AG04449 (cell line): ENCODE measurements at regions of chr3 and their contacts with region 1.

Region 1: DNA sequence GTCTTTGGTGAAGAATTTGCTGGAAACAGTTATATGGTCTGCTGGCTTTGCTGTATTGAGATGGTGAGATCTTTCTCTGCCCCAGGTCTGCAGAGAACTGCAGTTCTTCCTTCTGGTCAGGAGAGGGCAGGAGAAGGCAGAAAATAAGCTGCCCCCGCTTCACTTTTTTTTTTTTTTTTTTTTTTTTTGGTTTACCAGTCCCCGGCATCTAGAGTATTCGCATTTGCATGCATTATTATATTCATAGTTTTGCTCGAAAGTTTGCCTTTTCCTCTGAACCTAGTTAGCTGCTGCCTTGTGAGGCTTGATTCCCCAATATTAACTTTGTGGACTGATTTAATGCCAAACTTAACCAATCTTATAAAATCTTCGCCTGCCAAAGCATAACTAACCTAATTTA is 10.6 kb upstream of the PARL start:
- DNase-seq: peak; percentile 5
- H3K4me3 ChIP-seq: no peak overlapping the region
- CTCF ChIP-seq: peak; percentile 79

Region 2: DNA sequence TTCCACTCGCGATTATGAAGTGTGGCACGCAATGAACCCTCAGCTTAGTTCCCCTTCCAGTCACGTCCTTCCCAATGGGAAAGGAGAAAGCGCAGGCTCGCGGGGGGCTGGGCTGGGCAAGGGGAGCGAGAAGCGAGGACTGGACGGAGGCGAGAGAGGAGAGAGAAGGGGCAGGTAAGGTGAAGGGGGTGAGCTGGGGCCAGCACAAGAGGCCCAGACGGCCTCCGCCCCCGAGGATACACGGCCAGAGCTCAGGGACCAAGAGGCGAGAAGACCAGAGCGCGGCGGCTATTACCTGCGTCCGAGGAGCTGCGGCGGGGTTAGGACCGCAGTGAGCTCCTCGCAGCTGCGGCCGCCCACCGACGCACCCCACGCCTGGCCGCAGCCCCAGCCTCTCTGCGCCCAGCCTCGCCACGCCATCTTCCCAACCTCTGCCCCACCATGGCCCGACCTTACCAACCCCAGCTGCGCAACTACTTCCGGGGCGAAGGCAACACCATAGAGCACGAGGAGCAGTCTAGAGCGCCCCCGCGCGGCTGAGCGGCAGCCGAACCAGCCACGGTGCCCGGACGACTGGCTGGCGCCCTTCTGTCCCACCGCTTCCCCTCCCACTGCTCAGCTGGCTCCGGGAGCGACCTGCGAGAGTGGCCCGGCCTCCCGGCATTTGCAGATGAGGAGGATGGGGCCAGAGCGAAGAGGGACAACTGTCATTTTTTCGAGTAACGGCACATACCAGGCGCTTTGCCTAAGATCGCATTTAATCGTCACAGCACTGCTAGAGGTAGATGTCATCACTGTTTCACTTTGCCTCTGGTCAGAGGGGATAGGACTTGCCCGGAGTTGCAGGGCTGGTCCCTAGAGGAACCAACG is 10.6 kb before region 1 on chr3 and contains the start of gene PARL:
- CTCF ChIA-PET with region 1: interaction called, 55 read pairs
- POLR2A ChIA-PET with region 1: no interaction called
- DNase-seq: peak; percentile 23
- H3K4me3 ChIP-seq: peak within 1 kb of the TSS; percentile 95
- CTCF ChIP-seq: peak; percentile 99

Region 3: GRCh38 chr3:183954875-183955274 is 59.6 kb after region 1 on chr3:
- CTCF ChIA-PET with region 1: no interaction called
- POLR2A ChIA-PET with region 1: no interaction called
- DNase-seq: no peak
- H3K4me3 ChIP-seq: no peak overlapping the region
- CTCF ChIP-seq: no peak

Region 4: GRCh38 chr3:184017672-184018423 is 122.6 kb after region 1 on chr3 and contains the start of gene ABCC5:
- CTCF ChIA-PET with region 1: interaction called, 73 read pairs
- POLR2A ChIA-PET with region 1: no interaction called
- DNase-seq: peak; percentile 41
- H3K4me3 ChIP-seq: peak within 1 kb of the TSS; percentile 98
- CTCF ChIP-seq: no peak

Region 5: GRCh38 chr3:184229394-184230080 is 334.2 kb after region 1 on chr3 and contains the start of gene VWA5B2:
- CTCF ChIA-PET with region 1: interaction called, 12 read pairs
- POLR2A ChIA-PET with region 1: no interaction called
- DNase-seq: no peak
- H3K4me3 ChIP-seq: peak within 1 kb of the TSS; percentile 40
- CTCF ChIP-seq: no peak

Region 6: DNA sequence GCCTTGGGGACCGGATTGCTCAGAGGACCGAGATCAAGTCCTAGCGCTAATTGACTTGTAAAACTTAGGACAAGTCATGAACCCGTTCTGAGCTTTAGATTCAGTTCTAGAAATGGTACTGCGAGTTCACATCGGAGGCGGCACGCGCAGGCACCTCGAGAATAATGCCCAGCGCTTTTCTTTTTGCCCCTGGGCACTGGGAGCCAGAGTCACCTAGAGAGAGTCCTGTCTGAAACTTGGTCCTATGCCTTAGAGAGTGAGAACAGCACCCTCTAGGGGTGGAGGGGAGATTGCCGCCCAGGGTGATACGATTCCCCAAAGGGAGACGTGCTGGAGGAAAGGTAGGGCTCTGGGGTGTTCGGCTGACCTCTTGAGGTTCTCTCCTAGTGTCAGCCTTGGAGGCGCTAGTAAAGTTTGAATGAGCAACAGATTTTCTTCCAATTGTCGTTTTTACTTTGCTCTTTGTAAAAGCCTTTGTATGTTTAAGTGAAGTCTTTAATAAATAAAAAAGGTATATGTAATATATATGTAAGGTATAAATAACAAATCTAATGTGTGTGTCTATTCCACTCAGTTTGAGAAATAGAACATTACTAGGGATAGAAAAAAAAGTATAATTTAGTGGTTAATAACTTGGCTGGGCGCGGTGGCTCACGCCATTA is 355.0 kb after region 1 on chr3:
- CTCF ChIA-PET with region 1: interaction called, 47 read pairs
- POLR2A ChIA-PET with region 1: no interaction called
- DNase-seq: peak; percentile 49
- H3K4me3 ChIP-seq: peak overlapping the region; percentile 87
- CTCF ChIP-seq: peak; percentile 94